ENCODE measurements at regions of chr12 and their contacts with region 1.

Region 1: DNA sequence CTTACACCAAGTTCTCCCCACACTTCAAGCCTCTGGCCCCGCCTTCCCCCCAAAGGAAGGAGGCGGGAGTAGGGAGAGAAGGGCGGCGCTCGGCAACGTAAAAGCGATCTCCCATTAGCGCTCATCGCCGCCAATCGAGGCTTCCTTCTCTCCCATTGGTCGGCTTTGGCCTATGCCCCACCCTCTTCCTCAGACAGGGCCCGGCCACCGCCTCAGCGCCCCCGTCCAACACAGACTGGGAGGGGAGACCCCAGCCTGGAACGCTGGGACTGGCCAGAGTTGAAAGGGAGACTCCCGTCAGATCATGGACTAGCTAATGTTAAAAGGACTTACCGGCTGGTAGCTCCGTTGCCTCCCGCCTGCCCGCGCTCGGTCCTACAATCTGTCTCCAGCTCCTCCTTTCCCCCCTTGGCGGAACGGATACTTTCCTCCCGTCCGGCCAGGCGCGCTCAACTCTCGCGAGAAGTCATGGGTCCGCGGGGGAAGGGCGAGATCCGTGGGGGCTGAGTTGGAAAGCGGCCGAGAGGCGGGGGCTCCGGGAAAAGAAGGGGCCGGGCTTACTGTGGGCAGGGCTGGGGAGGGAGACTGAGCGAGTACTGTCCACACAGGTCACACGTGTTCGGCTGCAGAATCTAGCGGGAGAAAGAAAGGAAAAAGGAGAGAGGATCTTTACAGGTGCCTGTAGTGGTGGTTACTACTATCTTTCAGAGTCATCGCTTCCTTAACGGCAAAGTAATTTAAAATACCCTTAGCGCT is at the start of gene ATF7:
- DNase-seq: peak; percentile 97
- ATAC-seq: peak; percentile 98
- H3K4me3 ChIP-seq: peak within 1 kb of the TSS; percentile 70
- H3K27ac ChIP-seq: peak within 1 kb of the TSS; percentile 95
- H3K4me1 ChIP-seq: peaks cover 4% of the 10 kb centered on the region
- H3K27me3 ChIP-seq: no peaks in the 10 kb centered on the region
- CTCF ChIP-seq: no peak
- POLR2A ChIP-seq: peak; percentile 75
- RAD21 ChIP-seq: no peak
- total RNA-seq, gene ATF7: 7.0 and 9.4 TPM in 2 replicates

Region 2: DNA sequence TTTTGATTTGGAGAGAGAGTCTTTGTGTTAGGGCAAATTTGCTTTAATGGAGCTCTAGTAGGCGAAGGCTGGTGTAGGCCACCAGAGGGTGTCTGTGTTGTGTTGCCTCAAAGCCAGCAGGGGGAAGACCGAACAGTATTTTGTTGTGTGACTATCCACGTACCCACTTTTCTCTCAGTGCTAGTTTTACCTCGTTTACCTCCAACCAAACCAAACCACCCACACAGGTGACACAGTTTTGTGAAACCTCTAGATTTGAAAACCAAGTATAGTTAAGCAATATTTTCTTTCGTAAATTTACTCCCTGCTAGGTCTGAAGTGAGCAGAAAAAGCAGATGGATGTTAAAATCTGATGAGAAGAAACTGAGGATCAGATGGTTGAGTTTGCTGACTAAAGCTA is 82.6 kb before region 1 on chr12:
- CTCF ChIA-PET with region 1: interaction called, 3 read pairs
- POLR2A ChIA-PET with region 1: no interaction called
- dilution Hi-C with region 1: no loop called
- in situ Hi-C with region 1: no loop called
- intact Hi-C with region 1: loop called (anchors 1 kb)
- DNase-seq: peak; percentile 73
- ATAC-seq: peak; percentile 96
- H3K4me3 ChIP-seq: no peak overlapping the region
- H3K27ac ChIP-seq: no peak overlapping the region
- H3K4me1 ChIP-seq: no peaks in the 10 kb centered on the region
- H3K27me3 ChIP-seq: no peaks in the 10 kb centered on the region
- CTCF ChIP-seq: peak; percentile 96
- POLR2A ChIP-seq: no peak
- RAD21 ChIP-seq: peak; percentile 76

Measured in IMR-90 (cell line).